SK-N-SH (cell line): ENCODE measurements at regions of chr12 and their contacts with region 1.

Region 1: DNA sequence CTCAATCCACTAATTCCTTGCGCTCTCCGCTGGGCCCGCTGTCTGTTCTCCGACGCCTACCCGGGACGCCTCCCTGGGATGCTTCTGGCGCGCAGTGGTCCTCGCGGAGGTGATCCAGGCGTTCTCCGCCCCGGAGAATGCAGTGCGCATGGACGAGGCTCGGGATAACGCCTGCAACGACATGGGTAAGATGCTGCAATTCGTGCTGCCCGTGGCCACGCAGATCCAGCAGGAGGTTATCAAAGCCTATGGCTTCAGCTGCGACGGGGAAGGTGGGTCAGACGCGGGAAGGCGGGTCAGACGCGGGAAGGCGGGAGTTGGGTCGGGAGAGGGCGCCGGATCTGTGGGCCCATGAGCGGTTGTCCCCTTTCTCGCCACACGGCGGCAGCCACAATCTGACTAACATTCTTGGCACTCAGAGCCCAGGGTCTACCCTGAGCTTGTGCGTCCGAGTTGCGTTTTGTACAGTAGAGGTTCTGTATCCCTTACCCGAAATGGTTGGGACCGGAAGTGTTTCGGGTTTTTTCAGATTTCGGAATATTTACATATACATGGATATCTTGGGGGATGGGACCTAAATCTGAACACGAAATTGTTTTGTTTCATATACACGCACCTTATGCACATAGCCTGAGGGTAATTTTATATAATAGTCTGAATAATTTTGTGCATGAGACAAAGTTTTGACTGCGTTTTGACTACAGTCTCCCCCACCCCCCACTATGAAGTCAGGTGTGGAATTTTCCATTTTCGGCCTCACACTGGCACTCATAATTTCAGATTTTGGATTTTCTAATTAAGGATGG is 762 bp downstream of the C12orf57 start:
- DNase-seq: peak; percentile 93
- H3K4me3 ChIP-seq: peak overlapping the region; percentile 67 to 72
- H3K27ac ChIP-seq: peak overlapping the region; percentile 89 to 98
- H3K4me1 ChIP-seq: peaks cover 6 to 13% of the 10 kb centered on the region in 2 experiments; a peak in 3 of 4 replicates
- H3K27me3 ChIP-seq: no peaks in the 10 kb centered on the region
- CTCF ChIP-seq: peak; percentile 76
- EP300 ChIP-seq: no peak
- RAD21 ChIP-seq: peak; percentile 82

Region 2: DNA sequence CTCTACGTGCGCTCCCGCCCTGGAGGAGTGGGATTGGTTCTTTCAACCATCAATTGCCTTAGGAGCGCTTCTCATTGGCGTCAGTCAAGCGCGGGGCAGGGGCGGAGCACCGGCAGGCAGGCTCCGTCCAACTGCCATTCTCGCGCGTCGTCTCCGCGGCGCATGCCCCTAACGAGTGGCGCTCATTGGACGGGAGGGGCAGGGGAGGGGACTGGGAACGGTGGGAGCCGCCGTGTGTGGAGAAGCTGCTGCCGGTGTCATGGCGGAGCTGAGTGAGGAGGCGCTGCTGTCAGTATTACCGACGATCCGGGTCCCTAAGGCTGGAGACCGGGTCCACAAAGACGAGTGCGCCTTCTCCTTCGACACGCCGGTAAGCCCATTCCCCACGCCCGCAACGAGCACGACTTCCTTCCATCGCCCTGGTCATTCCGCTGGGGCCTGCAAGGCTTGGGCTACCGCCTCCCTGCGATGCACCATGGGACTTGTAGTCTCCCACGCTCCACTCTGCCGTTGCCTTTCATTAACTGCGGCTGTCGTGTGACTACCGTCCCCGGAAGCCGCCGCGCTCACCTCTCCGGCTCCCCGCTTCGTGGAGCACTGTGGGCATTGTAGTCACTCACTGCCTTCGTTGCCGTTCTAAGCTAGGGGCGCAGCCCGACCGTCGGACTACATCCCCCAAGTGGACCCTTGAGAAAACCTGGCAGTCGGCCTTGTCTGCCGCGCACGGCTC is 92.5 kb before region 1 on chr12 and contains the start of gene USP5:
- CTCF ChIA-PET with region 1: no interaction called
- POLR2A ChIA-PET with region 1: interaction called, 15 read pairs
- DNase-seq: peak; percentile 92
- H3K4me3 ChIP-seq: peak within 1 kb of the TSS; percentile 70 to 76
- H3K27ac ChIP-seq: peak within 1 kb of the TSS; percentile 73 to 97
- H3K4me1 ChIP-seq: peaks cover 7 to 17% of the 10 kb centered on the region in 2 experiments
- H3K27me3 ChIP-seq: no peaks in the 10 kb centered on the region
- CTCF ChIP-seq: 0 out of 2 replicates have a peak, but pooled peaks have one; percentile 7
- EP300 ChIP-seq: no peak
- RAD21 ChIP-seq: no peak
- polyA plus RNA-seq, gene USP5: 97.2 and 100 TPM in 2 replicates

Region 3: GRCh38 chr12:6890789-6891645 is 53.6 kb before region 1 on chr12:
- CTCF ChIA-PET with region 1: interaction called, 3 read pairs
- POLR2A ChIA-PET with region 1: interaction called, 10 read pairs
- DNase-seq: peak; percentile 98
- H3K4me3 ChIP-seq: peak overlapping the region; percentile 44 to 63
- H3K27ac ChIP-seq: peak overlapping the region; percentile 89 to 96
- H3K4me1 ChIP-seq: peaks cover 6 to 9% of the 10 kb centered on the region in 2 experiments; a peak in 3 of 4 replicates
- H3K27me3 ChIP-seq: no peaks in the 10 kb centered on the region
- CTCF ChIP-seq: peak; percentile 79
- EP300 ChIP-seq: 0 out of 4 replicates have a peak, but pooled peaks of 1 of the 2 experiments have one; percentile 16
- RAD21 ChIP-seq: peak; percentile 58

Region 4: DNA sequence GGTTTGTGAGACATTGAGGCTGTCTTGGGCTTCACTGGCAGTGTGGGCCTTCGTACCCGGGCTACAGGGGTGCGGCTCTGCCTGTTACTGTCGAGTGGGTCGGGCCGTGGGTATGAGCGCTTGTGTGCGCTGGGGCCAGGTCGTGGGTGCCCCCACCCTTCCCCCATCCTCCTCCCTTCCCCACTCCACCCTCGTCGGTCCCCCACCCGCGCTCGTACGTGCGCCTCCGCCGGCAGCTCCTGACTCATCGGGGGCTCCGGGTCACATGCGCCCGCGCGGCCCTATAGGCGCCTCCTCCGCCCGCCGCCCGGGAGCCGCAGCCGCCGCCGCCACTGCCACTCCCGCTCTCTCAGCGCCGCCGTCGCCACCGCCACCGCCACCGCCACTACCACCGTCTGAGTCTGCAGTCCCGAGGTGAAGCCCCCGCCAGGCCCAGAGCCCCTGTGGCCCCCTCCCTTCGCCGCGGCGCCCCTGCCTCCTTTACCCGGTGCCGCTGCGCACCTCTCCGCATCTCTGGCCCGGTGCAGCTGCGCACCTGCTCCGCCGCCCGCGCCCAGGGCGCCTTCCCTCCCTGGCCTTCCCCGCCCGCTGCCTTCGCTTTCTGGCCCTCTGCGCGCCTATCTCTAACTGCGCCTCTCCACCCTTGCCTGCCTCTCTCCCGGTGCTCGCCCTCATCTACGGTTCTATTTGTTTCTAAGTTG is 30.2 kb before region 1 on chr12 and contains the start of gene ENO2:
- CTCF ChIA-PET with region 1: interaction called, 7 read pairs
- POLR2A ChIA-PET with region 1: interaction called, 15 read pairs
- DNase-seq: peak; percentile 91
- H3K4me3 ChIP-seq: peak within 1 kb of the TSS; percentile 69 to 92
- H3K27ac ChIP-seq: peak within 1 kb of the TSS; percentile 49 to 82
- H3K4me1 ChIP-seq: peaks cover 14 to 18% of the 10 kb centered on the region in 2 experiments; a peak in 2 of 4 replicates
- H3K27me3 ChIP-seq: no peaks in the 10 kb centered on the region
- CTCF ChIP-seq: no peak
- EP300 ChIP-seq: no peak; a peak in 1 of 4 replicates
- RAD21 ChIP-seq: no peak
- polyA plus RNA-seq, gene ENO2: 50.6 and 56.9 TPM in 2 replicates

Region 5: DNA sequence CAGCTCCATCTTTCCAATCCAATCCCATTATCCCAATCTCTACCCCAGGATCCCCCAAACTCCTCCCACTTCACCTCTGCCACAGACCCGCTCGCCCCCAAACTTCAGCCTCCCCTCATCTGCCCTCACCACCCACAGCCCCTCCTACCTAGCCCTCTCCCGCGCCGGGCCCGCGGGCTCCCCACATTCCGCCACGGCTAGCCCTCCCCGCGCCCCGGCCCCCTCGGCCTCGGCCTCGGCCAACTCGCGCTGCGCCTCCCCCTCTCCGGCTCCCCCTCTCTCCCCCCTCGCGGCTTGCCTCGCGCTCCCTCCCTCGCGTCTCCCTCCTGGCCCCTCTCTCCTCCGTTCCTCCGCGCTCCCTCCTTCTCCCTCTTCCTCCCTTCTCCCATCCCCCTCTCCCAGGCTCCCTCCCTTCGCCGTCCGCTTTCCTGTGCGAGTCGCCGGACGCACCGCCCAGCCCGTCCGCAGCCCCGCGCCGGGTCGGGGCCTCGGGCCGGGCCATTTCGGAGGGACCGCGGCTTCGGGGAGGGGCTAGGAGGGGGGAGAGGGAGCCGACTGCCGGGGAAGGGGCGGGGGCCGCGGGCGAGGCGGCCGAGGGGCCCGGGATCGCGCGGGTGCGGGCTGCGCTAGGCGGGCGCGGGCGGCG is 17.1 kb before region 1 on chr12 and contains the start of gene ATN1:
- CTCF ChIA-PET with region 1: interaction called, 134 read pairs
- POLR2A ChIA-PET with region 1: interaction called, 82 read pairs
- DNase-seq: peak; percentile 91
- H3K4me3 ChIP-seq: peak within 1 kb of the TSS; percentile 82 to 87
- H3K27ac ChIP-seq: peak within 1 kb of the TSS; percentile 76 to 90
- H3K4me1 ChIP-seq: peaks cover 37 to 38% of the 10 kb centered on the region in 2 experiments
- H3K27me3 ChIP-seq: no peaks in the 10 kb centered on the region
- CTCF ChIP-seq: no peak
- EP300 ChIP-seq: peak; percentile 16 to 38; a peak in 2 of 4 replicates
- RAD21 ChIP-seq: no peak
- polyA plus RNA-seq, gene ATN1: 18.5 and 29.3 TPM in 2 replicates

Region 6: DNA sequence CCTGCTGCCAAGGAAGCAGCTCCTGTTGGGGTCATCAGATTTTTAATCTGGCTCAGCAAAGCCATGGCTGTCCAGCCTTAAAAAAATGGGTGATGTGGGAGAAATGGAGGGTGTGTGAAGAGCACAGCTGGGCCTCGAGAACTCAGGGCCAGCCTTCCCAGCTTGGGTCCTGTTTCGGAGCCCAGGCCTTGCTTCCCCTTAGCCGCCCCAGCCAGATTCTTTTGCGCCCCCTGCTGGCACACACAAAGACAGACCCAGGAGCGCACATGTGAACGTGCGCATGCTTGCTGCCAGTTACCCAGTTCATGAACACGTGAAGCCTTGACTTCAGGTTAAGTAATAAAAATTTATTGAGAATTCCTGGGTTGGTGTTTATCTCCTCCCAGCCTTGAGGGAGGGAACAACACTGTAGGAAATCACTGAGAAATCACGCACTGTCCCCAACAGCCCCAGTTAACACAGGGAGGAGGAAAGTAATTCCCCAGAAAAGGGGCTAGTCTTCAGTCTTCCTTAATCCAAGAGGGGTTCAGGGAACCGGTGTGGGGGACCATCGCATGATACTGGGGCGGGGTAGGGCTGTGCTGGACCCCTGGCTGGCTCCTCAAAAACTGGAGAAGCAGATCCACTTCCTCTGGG is 20.6 kb after region 1 on chr12:
- CTCF ChIA-PET with region 1: interaction called, 114 read pairs
- POLR2A ChIA-PET with region 1: interaction called, 62 read pairs
- DNase-seq: peak; percentile 89
- H3K4me3 ChIP-seq: peak overlapping the region in 1 of 2 experiments; percentile 33; a peak in 1 of 4 replicates
- H3K27ac ChIP-seq: peak overlapping the region; percentile 42 to 47; a peak in 3 of 4 replicates
- H3K4me1 ChIP-seq: peaks cover 6 to 22% of the 10 kb centered on the region in 2 experiments; a peak in 3 of 4 replicates
- H3K27me3 ChIP-seq: no peaks in the 10 kb centered on the region
- CTCF ChIP-seq: peak; percentile 90
- EP300 ChIP-seq: no peak
- RAD21 ChIP-seq: peak; percentile 70

Region 7: DNA sequence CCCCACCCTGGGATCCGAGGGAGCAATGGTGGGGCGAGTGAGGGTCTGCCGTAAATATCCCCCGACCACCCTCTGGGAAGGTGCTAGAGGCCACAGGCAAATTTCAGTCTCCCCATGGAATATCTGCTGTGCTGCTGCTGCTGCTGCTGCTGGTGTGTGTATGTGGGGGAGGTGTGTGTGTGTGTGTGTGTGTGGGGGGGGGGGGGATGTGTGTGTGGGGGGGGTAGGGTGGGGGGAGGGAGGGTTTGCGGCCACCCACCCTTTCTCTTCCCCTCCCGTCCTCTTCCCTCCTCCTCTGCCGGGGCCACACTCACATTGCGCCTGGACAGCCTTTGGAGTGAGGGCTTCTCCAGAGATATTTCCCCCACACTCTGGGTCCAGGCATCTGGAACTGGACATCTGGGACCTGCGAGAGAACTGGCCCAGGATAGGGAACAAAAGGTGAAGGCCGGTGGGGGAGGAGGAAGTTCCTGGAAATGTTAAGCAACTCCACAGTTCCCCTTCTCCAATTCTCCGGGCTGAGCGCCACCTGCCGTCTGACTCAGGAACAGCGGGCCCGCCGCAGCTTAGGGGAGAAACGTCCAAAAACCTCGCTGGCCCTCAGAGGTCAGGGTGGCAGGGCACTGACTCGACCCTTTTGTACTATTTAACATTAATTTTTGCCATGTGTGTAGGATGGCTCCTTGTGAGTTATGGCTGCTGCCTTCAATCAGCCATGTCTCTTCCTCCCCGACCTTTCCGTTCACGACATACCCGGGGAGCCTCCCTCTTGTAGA is 164.4 kb after region 1 on chr12 and contains the start of gene C1RL:
- CTCF ChIA-PET with region 1: interaction called, 28 read pairs
- POLR2A ChIA-PET with region 1: interaction called, 20 read pairs
- DNase-seq: peak; percentile 77
- H3K4me3 ChIP-seq: peak within 1 kb of the TSS; percentile 55 to 56
- H3K27ac ChIP-seq: peak within 1 kb of the TSS; percentile 61 to 83
- H3K4me1 ChIP-seq: peaks cover 0 to 23% of the 10 kb centered on the region in 2 experiments; a peak in 2 of 4 replicates
- H3K27me3 ChIP-seq: no peaks in the 10 kb centered on the region
- CTCF ChIP-seq: peak; percentile 83
- EP300 ChIP-seq: no peak; a peak in 1 of 4 replicates
- RAD21 ChIP-seq: peak; percentile 66
- polyA plus RNA-seq, gene C1RL: 8.3 and 9.5 TPM in 2 replicates